Stomach (tissue), 19 donors: ENCODE measurements at regions of chr7 and their contacts with region 1.

Region 1: GRCh38 chr7:82044497-82045080 is 274.7 kb upstream of the HGF start:
- DNase-seq: peak; percentile 28 to 79
- H3K4me3 ChIP-seq: no peak overlapping the region
- H3K27ac ChIP-seq: no peak overlapping the region
- H3K4me1 ChIP-seq: peaks cover 0 to 7% (median 1%) of the 10 kb centered on the region in 4 donors
- H3K27me3 ChIP-seq: no peaks in the 10 kb centered on the region
- CTCF ChIP-seq: peak in 5 of 7 experiments; percentile 41 to 64 (median 47)
- EP300 ChIP-seq: no peak
- POLR2A ChIP-seq: no peak

Region 2: GRCh38 chr7:82572195-82572880 is 527.7 kb after region 1 on chr7:
- intact Hi-C with region 1: loop called (anchors 10 kb)
- DNase-seq: peak; percentile 90 to 94
- H3K4me3 ChIP-seq: no peak overlapping the region
- H3K27ac ChIP-seq: no peak overlapping the region
- H3K4me1 ChIP-seq: peaks cover 0 to 7% (median 3%) of the 10 kb centered on the region in 4 donors
- H3K27me3 ChIP-seq: no peaks in the 10 kb centered on the region
- CTCF ChIP-seq: peak in 5 of 7 experiments; percentile 67 to 86 (median 81)
- EP300 ChIP-seq: no peak
- POLR2A ChIP-seq: no peak